Pancreas (tissue), 10 donors: ENCODE measurements at regions of chr19 and their contacts with region 1.

Region 1: GRCh38 chr19:56099638-56100539 is 21.2 kb downstream of the ZNF787 start:
- DNase-seq: peak in 1 of 6 donors; percentile 64
- ATAC-seq: no peak
- H3K4me3 ChIP-seq: no peak overlapping the region
- H3K27ac ChIP-seq: no peak overlapping the region
- H3K4me1 ChIP-seq: no peaks in the 10 kb centered on the region
- H3K27me3 ChIP-seq: no peaks in the 10 kb centered on the region
- CTCF ChIP-seq: no peak

Region 2: DNA sequence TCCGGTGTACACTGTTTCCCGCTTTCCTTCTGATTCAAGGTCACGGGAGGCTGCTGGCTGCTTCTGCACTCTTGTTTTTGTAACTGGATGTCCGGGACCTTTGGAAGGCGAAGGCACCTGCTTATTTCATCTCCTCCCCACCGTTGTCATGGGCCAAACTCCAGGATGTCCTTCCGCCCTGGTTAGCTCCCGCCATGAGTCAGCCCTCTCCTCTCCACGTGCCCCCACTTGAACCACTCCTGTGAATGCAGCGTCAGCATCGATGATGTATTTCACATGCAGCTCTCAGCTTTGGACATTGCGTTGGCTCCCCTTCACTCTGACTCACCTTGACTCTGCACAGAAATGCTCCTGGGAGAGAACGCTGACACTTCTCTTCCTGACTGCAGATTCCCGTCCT is 70.4 kb after region 1 on chr19:
- intact Hi-C with region 1: loop called in 2 of 3 experiments (anchors 5 kb)
- DNase-seq: peak in 3 of 6 donors; percentile 48 to 76 (median 63)
- ATAC-seq: peak; percentile 57 to 86 (median 70)
- H3K4me3 ChIP-seq: no peak overlapping the region
- H3K27ac ChIP-seq: no peak overlapping the region
- H3K4me1 ChIP-seq: no peaks in the 10 kb centered on the region
- H3K27me3 ChIP-seq: no peaks in the 10 kb centered on the region
- CTCF ChIP-seq: no peak

Region 3: GRCh38 chr19:56176881-56177280 is 77.0 kb after region 1 on chr19:
- intact Hi-C with region 1: loop called in 2 of 3 experiments (anchors 5 kb)
- DNase-seq: no peak
- ATAC-seq: no peak
- H3K4me3 ChIP-seq: no peak overlapping the region
- H3K27ac ChIP-seq: no peak overlapping the region
- H3K4me1 ChIP-seq: no peaks in the 10 kb centered on the region
- H3K27me3 ChIP-seq: no peaks in the 10 kb centered on the region
- CTCF ChIP-seq: no peak

Region 4: DNA sequence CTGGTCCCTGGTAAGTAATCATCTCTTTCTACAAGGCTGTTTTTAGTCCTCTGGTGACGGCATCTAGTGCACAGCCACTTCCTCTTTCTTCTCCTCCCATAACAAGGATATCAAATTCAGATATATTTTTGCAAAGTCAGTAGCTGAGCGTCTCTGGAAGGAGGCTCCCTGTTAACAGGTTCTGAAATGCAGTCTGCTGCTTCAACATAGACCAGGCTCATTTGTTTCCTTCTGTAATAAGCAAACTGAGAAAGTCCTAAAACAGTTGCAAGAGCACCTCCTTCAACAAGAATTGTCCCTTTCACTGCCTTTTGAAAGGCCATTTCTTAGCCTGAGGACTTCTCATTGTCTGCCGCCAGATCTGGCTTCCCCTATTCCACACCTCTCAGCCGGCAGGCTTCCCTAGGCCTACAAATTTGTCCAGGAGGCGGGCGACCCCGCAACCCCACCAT is 222.1 kb after region 1 on chr19:
- intact Hi-C with region 1: no loop called
- DNase-seq: no peak
- ATAC-seq: peak in 1 of 4 donors; percentile 68
- H3K4me3 ChIP-seq: no peak overlapping the region
- H3K27ac ChIP-seq: peak overlapping the region in 1 of 4 donors; percentile 15
- H3K4me1 ChIP-seq: no peaks in the 10 kb centered on the region
- H3K27me3 ChIP-seq: no peaks in the 10 kb centered on the region
- CTCF ChIP-seq: no peak